ENCODE measurements at regions of chr9 and their contacts with region 1.

Region 1: DNA sequence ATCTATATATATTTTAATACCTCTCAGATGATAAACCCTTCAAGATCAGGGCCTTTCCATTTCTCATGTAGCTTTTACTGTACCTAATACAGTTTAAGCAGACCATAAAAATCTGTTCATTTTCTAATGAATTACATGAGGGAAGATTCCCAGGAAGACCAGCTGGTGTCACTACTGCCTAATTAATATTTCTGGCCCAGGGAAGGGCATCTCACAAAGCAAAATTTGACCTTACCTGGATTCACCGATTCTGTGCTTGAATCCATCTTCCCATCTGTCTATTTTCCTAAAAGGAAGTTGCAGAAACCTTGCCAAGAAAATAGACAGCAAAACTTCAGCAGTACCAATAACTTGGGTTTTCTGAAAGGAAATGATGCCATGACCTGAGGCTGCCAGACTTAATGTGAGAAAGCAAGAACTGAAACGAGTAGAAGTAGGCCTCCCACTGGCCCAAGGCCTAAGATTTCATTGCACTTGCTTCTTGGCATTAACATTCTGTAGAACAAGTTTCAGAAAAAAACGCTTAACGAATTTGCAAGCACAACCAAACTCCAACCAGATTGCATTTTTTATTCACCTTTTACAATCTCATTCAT is 83.0 kb upstream of the GLIS3 start:
- DNase-seq: no peak
- ATAC-seq: no peak
- H3K4me3 ChIP-seq: no peak overlapping the region
- H3K27ac ChIP-seq: no peak overlapping the region
- H3K4me1 ChIP-seq: no peaks in the 10 kb centered on the region
- H3K27me3 ChIP-seq: no peaks in the 10 kb centered on the region
- CTCF ChIP-seq: peak; percentile 30 to 74 (median 62)
- POLR2A ChIP-seq: no peak

Region 2: GRCh38 chr9:3948826-3949556 is 433.8 kb before region 1 on chr9:
- intact Hi-C with region 1: no loop called
- DNase-seq: no peak
- ATAC-seq: peak in 3 of 4 donors; percentile 55 to 75 (median 61)
- H3K4me3 ChIP-seq: no peak overlapping the region
- H3K27ac ChIP-seq: peak overlapping the region in 6 of 12 donors; percentile 16 to 44 (median 28)
- H3K4me1 ChIP-seq: peaks cover 0 to 28% (median 0%) of the 10 kb centered on the region in 12 donors
- H3K27me3 ChIP-seq: no peaks in the 10 kb centered on the region
- CTCF ChIP-seq: no peak
- POLR2A ChIP-seq: no peak

Region 3: DNA sequence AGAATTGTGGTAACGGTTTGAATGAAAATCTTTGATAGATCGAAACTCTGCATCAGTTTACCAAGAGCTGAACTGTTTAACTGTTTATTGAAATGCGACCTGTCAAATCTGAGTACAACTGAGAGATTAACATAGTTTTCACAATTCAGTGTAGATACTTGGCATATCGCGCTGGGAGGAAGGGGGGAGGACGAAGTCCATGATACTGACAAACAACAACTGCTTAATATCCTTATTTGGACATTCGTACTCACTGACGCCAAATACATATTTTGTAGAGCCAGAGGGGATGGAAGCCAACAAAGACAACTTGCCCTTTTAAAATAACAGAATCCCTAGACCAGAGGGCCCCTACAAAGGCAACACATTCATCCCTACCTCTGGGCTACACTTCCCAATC is 176.1 kb before region 1 on chr9:
- intact Hi-C with region 1: no loop called
- DNase-seq: peak in 1 of 5 donors; percentile 9
- ATAC-seq: peak in 2 of 4 donors; percentile 58 to 72
- H3K4me3 ChIP-seq: no peak overlapping the region
- H3K27ac ChIP-seq: peak overlapping the region in 7 of 12 donors; percentile 18 to 61 (median 53)
- H3K4me1 ChIP-seq: peaks cover 0 to 20% (median 11%) of the 10 kb centered on the region in 12 donors
- H3K27me3 ChIP-seq: no peaks in the 10 kb centered on the region
- CTCF ChIP-seq: no peak
- POLR2A ChIP-seq: no peak

Region 4: GRCh38 chr9:4640027-4640426 is 257.2 kb after region 1 on chr9:
- intact Hi-C with region 1: loop called (anchors 1 to 5 kb)
- DNase-seq: no peak
- ATAC-seq: no peak
- H3K4me3 ChIP-seq: no peak overlapping the region
- H3K27ac ChIP-seq: no peak overlapping the region
- H3K4me1 ChIP-seq: no peaks in the 10 kb centered on the region
- H3K27me3 ChIP-seq: no peaks in the 10 kb centered on the region
- CTCF ChIP-seq: peak; percentile 33 to 61 (median 49)
- POLR2A ChIP-seq: no peak

Measured in heart left ventricle (tissue), 16 donors.